Activated naive CD4-positive, alpha-beta T cell treated with anti-CD3 and anti-CD28 coated beads for 36 hours (primary cell): ENCODE measurements at regions of chr10 and their contacts with region 1.

Region 1: GRCh38 chr10:119686439-119687191 is 35.4 kb downstream of the BAG3 start:
- DNase-seq: peak; percentile 93
- H3K4me3 Mint-ChIP-seq: peak overlapping the region; percentile 23
- H3K27ac Mint-ChIP-seq: peak overlapping the region; percentile 63
- H3K4me1 Mint-ChIP-seq: peaks cover 25% of the 10 kb centered on the region
- H3K27me3 Mint-ChIP-seq: no peaks in the 10 kb centered on the region

Region 2: DNA sequence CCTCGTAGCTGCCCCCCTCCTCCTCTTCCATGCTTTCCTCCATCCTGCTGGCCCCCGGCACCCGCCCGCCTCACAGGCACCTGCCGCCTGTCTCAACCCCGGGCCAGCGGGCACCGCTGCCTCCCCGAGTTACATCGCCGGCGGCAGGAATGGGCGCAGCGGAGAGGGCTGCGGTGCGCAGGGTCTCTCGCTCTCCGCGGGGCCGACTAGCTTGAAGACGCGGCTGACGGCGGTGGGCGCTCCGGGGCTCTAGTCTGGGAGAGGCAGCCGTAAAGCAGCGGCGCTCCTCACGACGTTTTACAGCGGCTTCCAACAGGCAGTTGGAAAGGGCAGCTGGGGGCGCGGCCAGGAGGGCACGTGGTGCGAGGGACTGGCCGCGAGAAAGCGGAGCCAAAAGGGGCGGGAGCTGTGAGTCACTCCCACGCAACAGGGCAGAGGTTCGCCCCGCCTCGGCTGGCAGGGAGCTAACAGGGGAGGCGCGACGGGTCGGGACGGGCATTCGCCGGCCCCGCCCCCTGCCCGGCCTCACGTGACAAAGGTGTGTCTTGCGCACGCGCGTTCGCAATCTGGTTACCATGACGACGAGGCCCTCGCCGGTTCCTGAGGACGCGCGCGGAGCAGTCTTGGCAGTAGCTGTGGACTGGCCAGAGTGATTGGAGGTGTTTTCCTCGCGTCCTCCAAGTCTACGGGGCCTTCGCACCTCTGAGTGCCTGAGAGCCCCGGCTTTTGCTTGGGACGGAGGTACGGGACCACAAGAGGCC is 931.7 kb before region 1 on chr10 and contains the start of gene CACUL1:
- CTCF ChIA-PET with region 1: no interaction called
- intact Hi-C with region 1: no loop called
- DNase-seq: peak; percentile 99
- H3K4me3 Mint-ChIP-seq: peak within 1 kb of the TSS; percentile 95
- H3K27ac Mint-ChIP-seq: peak within 1 kb of the TSS; percentile 82
- H3K4me1 Mint-ChIP-seq: peaks cover 36% of the 10 kb centered on the region
- H3K27me3 Mint-ChIP-seq: no peaks in the 10 kb centered on the region
- total RNA-seq, gene CACUL1: 18.4 to 19.2 TPM

Region 3: GRCh38 chr10:119090968-119091367 is 595.6 kb before region 1 on chr10:
- CTCF ChIA-PET with region 1: no interaction called
- intact Hi-C with region 1: no loop called
- DNase-seq: peak; percentile 31
- H3K4me3 Mint-ChIP-seq: no peak overlapping the region
- H3K27ac Mint-ChIP-seq: no peak overlapping the region
- H3K4me1 Mint-ChIP-seq: peaks cover 22% of the 10 kb centered on the region
- H3K27me3 Mint-ChIP-seq: no peaks in the 10 kb centered on the region

Region 4: DNA sequence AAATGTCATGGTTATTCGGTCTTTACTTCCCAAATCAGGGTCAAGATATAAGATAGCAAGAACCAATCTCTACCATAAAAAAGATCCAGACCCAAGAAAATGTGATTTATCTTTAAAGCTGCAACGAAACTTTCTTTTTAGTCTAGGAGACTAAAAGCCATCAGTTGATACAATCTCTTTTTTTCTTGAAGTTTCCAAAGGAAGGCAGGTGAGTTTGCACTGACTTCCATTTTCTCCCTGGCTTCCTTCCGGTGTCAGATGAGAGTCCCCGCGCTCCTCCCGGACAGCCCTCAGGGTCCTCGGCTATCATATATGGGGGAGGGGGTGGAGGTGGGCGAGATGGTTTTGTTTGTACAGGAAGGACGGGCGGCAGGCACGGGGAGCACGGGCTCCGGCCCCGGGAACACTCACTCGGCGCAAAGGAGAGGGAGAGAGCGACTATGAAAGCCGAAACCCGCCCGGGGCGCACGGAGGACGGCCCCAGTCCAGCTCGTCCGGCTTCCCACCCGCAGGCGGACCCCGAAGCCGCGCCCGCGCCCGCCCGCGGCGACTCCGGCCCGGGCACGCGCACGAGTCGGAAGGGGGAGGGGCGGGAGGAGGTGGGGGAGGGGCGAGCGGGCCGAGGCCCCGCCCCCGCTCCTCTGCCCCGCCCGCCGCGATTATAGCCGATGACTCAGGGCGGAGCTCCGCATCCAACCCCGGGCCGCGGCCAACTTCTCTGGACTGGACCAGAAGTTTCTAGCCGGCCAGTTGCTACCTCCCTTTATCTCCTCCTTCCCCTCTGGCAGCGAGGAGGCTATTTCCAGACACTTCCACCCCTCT is 35.7 kb before region 1 on chr10 and contains the start of gene BAG3:
- CTCF ChIA-PET with region 1: interaction called, 4 read pairs
- intact Hi-C with region 1: loop called (anchors 1 kb)
- DNase-seq: peak; percentile 82
- H3K4me3 Mint-ChIP-seq: peak within 1 kb of the TSS; percentile 97
- H3K27ac Mint-ChIP-seq: peak within 1 kb of the TSS; percentile 95
- H3K4me1 Mint-ChIP-seq: peaks cover 38% of the 10 kb centered on the region
- H3K27me3 Mint-ChIP-seq: no peaks in the 10 kb centered on the region
- total RNA-seq, gene BAG3: 20.9 to 24.3 TPM

Region 5: DNA sequence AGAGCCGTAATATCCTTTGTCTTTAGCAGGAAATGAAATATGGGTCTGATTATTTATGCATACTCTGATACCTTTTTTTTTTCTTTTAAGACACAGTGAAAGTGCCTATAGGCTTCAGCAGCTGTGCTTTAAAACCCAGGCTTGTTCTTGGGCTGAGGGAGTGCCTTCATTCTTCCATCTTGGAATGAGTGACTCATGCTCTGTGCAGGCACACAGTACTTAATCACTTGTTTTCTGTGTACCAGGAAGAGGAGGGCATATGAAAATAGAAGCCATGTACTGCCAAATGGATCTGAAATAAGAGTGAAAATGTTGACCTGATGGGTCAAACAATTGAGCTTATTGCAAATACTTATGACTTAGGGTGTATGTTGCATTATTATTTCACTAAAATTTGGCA is 51.2 kb after region 1 on chr10:
- CTCF ChIA-PET with region 1: interaction called, 11 read pairs
- intact Hi-C with region 1: no loop called
- DNase-seq: peak; percentile 39
- H3K4me3 Mint-ChIP-seq: no peak overlapping the region
- H3K27ac Mint-ChIP-seq: peak overlapping the region; percentile 59
- H3K4me1 Mint-ChIP-seq: peaks cover 50% of the 10 kb centered on the region
- H3K27me3 Mint-ChIP-seq: no peaks in the 10 kb centered on the region

Region 6: GRCh38 chr10:119859420-119860258 is 173.0 kb after region 1 on chr10:
- CTCF ChIA-PET with region 1: interaction called, 32 read pairs
- intact Hi-C with region 1: loop called (anchors 1 kb)
- DNase-seq: no peak
- H3K4me3 Mint-ChIP-seq: no peak overlapping the region
- H3K27ac Mint-ChIP-seq: no peak overlapping the region
- H3K4me1 Mint-ChIP-seq: peaks cover 43% of the 10 kb centered on the region
- H3K27me3 Mint-ChIP-seq: no peaks in the 10 kb centered on the region

Region 7: DNA sequence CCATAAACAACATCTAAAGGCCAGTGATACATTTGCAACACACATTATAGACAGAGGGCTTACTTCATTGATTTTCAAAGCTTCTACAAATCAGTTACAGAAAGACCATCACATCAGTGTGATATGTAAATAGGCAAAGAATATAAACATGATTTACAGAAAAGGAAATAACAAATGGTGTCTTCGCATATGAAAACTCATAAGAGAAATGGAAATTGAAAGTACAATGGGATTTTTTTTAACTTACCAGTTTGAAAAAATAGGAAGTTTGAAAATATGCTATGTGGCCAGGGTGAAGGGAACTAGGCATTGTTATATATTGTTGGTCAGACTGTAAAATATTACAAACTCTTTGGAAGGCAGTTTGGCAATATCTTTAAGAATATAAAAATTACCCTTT is 233.2 kb after region 1 on chr10:
- CTCF ChIA-PET with region 1: no interaction called
- intact Hi-C with region 1: loop called (anchors 2 kb)
- DNase-seq: no peak
- H3K4me3 Mint-ChIP-seq: no peak overlapping the region
- H3K27ac Mint-ChIP-seq: peak overlapping the region; percentile 42
- H3K4me1 Mint-ChIP-seq: peaks cover 13% of the 10 kb centered on the region
- H3K27me3 Mint-ChIP-seq: no peaks in the 10 kb centered on the region

Region 8: DNA sequence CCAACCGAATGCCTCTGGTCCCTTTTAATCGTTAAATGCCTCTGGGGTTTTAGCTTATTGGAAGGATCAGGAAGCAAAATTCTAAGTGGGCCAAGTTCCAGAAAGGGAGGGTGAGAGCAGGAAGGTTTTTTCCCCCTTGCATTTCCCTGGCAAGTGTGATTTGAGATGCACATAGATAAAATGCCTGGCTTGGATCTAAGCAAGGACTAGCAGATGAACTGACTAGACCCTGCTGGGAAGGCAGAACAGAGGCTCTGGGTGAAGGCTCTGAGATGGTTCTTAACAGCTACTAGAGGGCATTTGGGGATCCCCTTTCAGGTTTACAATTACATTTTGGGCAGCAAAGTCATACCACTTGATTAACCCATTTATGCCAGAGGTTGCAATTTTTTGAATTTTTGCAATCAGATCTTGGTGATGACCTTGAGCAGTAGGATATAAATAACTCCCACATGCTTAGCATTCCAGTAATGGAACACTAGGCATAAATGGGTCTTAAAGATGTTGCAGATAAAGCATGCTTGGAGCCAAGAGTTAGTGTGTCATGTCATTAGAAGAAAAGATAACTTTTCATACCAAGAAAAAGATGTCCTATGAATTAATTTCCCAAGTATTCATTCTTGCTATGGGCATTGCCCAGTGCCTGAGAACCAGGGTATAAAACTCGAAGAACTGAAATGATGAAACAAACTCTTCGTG is 411.8 kb after region 1 on chr10:
- CTCF ChIA-PET with region 1: no interaction called
- intact Hi-C with region 1: no loop called
- DNase-seq: no peak
- H3K4me3 Mint-ChIP-seq: no peak overlapping the region
- H3K27ac Mint-ChIP-seq: no peak overlapping the region
- H3K4me1 Mint-ChIP-seq: no peaks in the 10 kb centered on the region
- H3K27me3 Mint-ChIP-seq: peaks cover 6% of the 10 kb centered on the region

Region 9: GRCh38 chr10:120735773-120736371 is 1049.3 kb after region 1 on chr10:
- CTCF ChIA-PET with region 1: no interaction called
- intact Hi-C with region 1: loop called (anchors 5 kb)
- DNase-seq: no peak
- H3K4me3 Mint-ChIP-seq: no peak overlapping the region
- H3K27ac Mint-ChIP-seq: no peak overlapping the region
- H3K4me1 Mint-ChIP-seq: no peaks in the 10 kb centered on the region
- H3K27me3 Mint-ChIP-seq: peaks cover 2% of the 10 kb centered on the region